ENCODE measurements at regions of chr1 and their contacts with region 1.

Region 1: GRCh38 chr1:22704440-22705067 is 6.1 kb upstream of the EPHB2 start:
- DNase-seq: peak; percentile 86
- ATAC-seq: peak; percentile 95
- H3K4me3 Mint-ChIP-seq: no peak overlapping the region
- H3K27ac Mint-ChIP-seq: no peak overlapping the region
- H3K4me1 Mint-ChIP-seq: 0 out of 2 replicates have a peak, but pooled peaks cover 7% of the 10 kb centered on the region
- H3K27me3 Mint-ChIP-seq: peaks cover 7% of the 10 kb centered on the region
- CTCF ChIP-seq: peak; percentile 81

Region 2: GRCh38 chr1:22689505-22689904 is 15.0 kb before region 1 on chr1:
- CTCF ChIA-PET with region 1: interaction called, 16 read pairs
- POLR2A ChIA-PET with region 1: no interaction called
- DNase-seq: no peak
- ATAC-seq: no peak
- H3K4me3 Mint-ChIP-seq: no peak overlapping the region
- H3K27ac Mint-ChIP-seq: no peak overlapping the region
- H3K4me1 Mint-ChIP-seq: peaks cover 6% of the 10 kb centered on the region
- H3K27me3 Mint-ChIP-seq: no peaks in the 10 kb centered on the region
- CTCF ChIP-seq: no peak

Region 3: GRCh38 chr1:22722901-22723550 is 18.5 kb after region 1 on chr1:
- CTCF ChIA-PET with region 1: interaction called, 13 read pairs
- POLR2A ChIA-PET with region 1: no interaction called
- DNase-seq: no peak
- ATAC-seq: no peak
- H3K4me3 Mint-ChIP-seq: no peak overlapping the region
- H3K27ac Mint-ChIP-seq: no peak overlapping the region
- H3K4me1 Mint-ChIP-seq: no peaks in the 10 kb centered on the region
- H3K27me3 Mint-ChIP-seq: no peaks in the 10 kb centered on the region
- CTCF ChIP-seq: no peak

Region 4: DNA sequence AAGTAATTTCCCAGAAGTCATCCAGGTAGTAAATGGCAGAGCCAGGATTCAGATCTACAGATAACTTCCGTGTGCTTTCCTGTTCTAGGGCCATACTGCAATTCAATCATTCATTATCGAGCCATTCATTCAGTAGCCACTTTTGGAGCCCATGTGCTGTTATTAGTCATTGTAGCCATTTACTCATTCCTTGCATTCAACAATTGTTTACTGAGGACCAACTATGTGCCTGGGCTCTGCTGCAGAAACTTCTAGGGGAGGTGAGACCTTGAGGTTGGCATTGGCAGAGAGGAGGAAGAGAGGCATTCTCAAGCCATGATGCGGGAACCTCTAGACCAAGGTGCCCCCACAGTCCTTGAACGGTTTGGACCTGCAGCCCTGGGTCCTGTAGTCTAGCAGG is 34.0 kb after region 1 on chr1:
- CTCF ChIA-PET with region 1: interaction called, 17 read pairs
- POLR2A ChIA-PET with region 1: no interaction called
- DNase-seq: no peak
- ATAC-seq: no peak
- H3K4me3 Mint-ChIP-seq: no peak overlapping the region
- H3K27ac Mint-ChIP-seq: no peak overlapping the region
- H3K4me1 Mint-ChIP-seq: 0 out of 2 replicates have a peak, but pooled peaks cover 3% of the 10 kb centered on the region
- H3K27me3 Mint-ChIP-seq: no peaks in the 10 kb centered on the region
- CTCF ChIP-seq: no peak

Region 5: GRCh38 chr1:22930235-22930912 is 225.8 kb after region 1 on chr1:
- CTCF ChIA-PET with region 1: interaction called, 38 read pairs
- POLR2A ChIA-PET with region 1: no interaction called
- DNase-seq: peak; percentile 91
- ATAC-seq: peak; percentile 96
- H3K4me3 Mint-ChIP-seq: no peak overlapping the region
- H3K27ac Mint-ChIP-seq: no peak overlapping the region
- H3K4me1 Mint-ChIP-seq: no peaks in the 10 kb centered on the region
- H3K27me3 Mint-ChIP-seq: peaks cover 3% of the 10 kb centered on the region; the same call in 1 of the 2 replicates
- CTCF ChIP-seq: peak; percentile 85